Head of caudate nucleus (tissue), 42 donors: ENCODE measurements at regions of chr9 and their contacts with region 1.

Region 1: DNA sequence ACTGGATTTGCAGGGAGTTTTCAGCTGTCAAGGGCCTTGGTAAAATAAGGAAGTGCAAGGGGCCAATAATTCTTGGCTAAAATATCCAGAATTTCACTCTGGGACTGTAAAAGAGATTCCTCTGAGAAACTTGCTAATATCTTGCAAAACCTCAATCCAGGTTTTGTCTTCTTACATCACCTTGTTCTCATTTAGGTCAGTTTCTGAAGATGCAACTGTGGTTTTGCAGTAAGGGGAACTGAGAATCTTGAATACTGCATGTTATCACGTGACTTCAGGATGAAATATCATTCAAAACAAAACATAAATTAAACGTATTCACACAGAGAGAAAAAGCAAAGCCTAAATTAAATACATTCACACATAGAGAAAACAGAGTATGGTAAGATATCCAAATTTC is 35.0 kb upstream of the RIC1 start:
- DNase-seq: no peak

Region 2: GRCh38 chr9:5186416-5187169 is 407.3 kb before region 1 on chr9:
- intact Hi-C with region 1: loop called (anchors 5 kb)
- DNase-seq: peak in 40 of 42 donors; percentile 8 to 73 (median 40)

Region 3: DNA sequence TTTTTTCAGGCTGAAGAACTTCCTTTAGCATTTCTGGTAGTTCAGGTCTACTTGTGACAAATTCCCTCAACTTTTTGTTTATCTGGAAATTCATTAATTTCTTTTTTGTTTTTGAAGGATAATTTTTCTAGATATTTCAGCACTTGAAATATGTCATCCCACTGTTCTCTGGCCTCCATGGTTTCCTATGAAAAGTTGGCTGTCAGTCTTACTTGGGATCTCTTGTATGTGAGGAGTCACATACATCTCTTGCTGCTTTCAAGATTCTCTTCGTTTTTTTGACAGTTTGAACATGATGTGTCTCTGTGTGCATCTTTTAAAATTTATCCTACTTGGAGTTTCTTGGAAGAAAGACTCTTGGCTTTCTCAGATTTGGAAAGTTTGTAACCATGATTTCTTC is 114.5 kb after region 1 on chr9:
- intact Hi-C with region 1: no loop called
- DNase-seq: no peak